ENCODE measurements at regions of chr15 and their contacts with region 1.

Region 1: GRCh38 chr15:88627463-88627862 is 6.3 kb downstream of the AEN start:
- DNase-seq: no peak
- ATAC-seq: no peak
- H3K4me3 ChIP-seq: no peak overlapping the region
- H3K27ac ChIP-seq: peak overlapping the region in 1 of 12 donors; percentile 74
- H3K4me1 ChIP-seq: peaks cover 0 to 86% (median 14%) of the 10 kb centered on the region in 12 donors
- H3K27me3 ChIP-seq: no peaks in the 10 kb centered on the region
- CTCF ChIP-seq: no peak
- POLR2A ChIP-seq: no peak

Region 2: GRCh38 chr15:88563638-88564037 is 63.8 kb before region 1 on chr15:
- intact Hi-C with region 1: no loop called
- DNase-seq: no peak
- ATAC-seq: no peak
- H3K4me3 ChIP-seq: no peak overlapping the region
- H3K27ac ChIP-seq: no peak overlapping the region
- H3K4me1 ChIP-seq: no peaks in the 10 kb centered on the region
- H3K27me3 ChIP-seq: no peaks in the 10 kb centered on the region
- CTCF ChIP-seq: no peak
- POLR2A ChIP-seq: no peak

Region 3: GRCh38 chr15:88664151-88664778 is 36.8 kb after region 1 on chr15:
- intact Hi-C with region 1: loop called in 1 of 10 experiments (anchors 5 kb)
- DNase-seq: no peak
- ATAC-seq: peak in 1 of 4 donors; percentile 39
- H3K4me3 ChIP-seq: no peak overlapping the region
- H3K27ac ChIP-seq: no peak overlapping the region
- H3K4me1 ChIP-seq: peaks cover 0 to 8% (median 2%) of the 10 kb centered on the region in 12 donors
- H3K27me3 ChIP-seq: peaks cover 0 to 5% (median 0%) of the 10 kb centered on the region in 9 donors
- CTCF ChIP-seq: peak in 10 of 12 donors; percentile 11 to 45 (median 24)
- POLR2A ChIP-seq: no peak